Activated CD4-positive, alpha-beta memory T cell treated with anti-CD3 and anti-CD28 coated beads, Interleukin-2, amount 10 ng/mL, durations not matched to agents 7 days and 5 days (primary cell): ENCODE measurements at regions of chr6 and their contacts with region 1.

Region 1: GRCh38 chr6:31493875-31494694 is 3.9 kb upstream of the MICB start:
- DNase-seq: peak; percentile 85
- H3K4me3 Mint-ChIP-seq: peak overlapping the region; percentile 81
- H3K27ac Mint-ChIP-seq: peak overlapping the region; percentile 78
- H3K4me1 Mint-ChIP-seq: peaks cover 60% of the 10 kb centered on the region
- H3K27me3 Mint-ChIP-seq: no peaks in the 10 kb centered on the region

Region 2: GRCh38 chr6:31399589-31400466 is 94.3 kb before region 1 on chr6:
- CTCF ChIA-PET with region 1: interaction called, 12 read pairs
- POLR2A ChIA-PET with region 1: interaction called, 20 read pairs
- DNase-seq: peak; percentile 68
- H3K4me3 Mint-ChIP-seq: peak overlapping the region; percentile 87
- H3K27ac Mint-ChIP-seq: peak overlapping the region; percentile 87
- H3K4me1 Mint-ChIP-seq: peaks cover 52% of the 10 kb centered on the region
- H3K27me3 Mint-ChIP-seq: peaks cover 2% of the 10 kb centered on the region

Region 3: DNA sequence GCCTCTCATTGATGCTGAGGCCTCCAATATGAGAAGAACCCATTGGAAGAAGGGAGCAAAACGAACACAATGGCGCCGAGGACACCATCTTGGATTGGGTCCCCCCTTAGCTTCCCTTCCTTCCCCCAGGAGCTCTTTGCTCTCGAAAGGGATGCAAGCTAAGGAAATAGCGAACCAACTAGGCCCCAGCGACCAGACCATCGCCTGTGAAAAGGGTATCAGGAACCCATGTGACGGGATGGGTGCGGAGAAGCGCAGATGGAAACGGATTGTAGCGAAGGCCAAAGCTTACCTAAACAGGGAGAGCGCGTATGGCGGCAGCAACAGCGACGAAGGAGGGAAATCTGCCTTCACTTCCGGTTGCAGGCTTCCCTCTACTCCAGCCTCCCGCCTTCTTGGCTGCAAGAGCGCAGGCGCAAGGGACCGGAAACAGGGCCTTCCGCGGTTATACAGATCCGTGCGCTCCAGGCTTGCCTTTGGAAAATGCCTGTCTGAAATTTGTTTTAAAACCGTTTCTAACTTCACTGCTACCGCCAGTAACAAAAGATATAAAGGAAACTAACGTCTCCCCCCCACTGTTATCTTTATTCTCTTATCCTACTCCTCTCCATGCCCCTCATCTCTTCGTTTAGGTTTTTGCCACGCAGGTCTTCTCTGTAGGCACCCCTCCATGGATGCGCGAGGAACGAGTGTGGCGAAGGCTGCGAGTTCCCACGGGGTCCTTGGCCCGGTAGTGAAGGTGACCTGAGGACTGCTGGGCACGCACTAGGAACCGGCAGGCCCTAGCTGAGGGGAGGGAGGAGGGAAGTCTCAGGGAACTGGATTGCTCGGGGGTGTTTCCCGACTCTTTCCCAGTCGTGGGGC is 47.8 kb after region 1 on chr6 and contains the start of gene DDX39B:
- CTCF ChIA-PET with region 1: interaction called, 53 read pairs
- POLR2A ChIA-PET with region 1: interaction called, 164 read pairs
- DNase-seq: peak; percentile 94
- H3K4me3 Mint-ChIP-seq: peak within 1 kb of the TSS; percentile 89
- H3K27ac Mint-ChIP-seq: peak within 1 kb of the TSS; percentile 75
- H3K4me1 Mint-ChIP-seq: peaks cover 52% of the 10 kb centered on the region
- H3K27me3 Mint-ChIP-seq: no peaks in the 10 kb centered on the region
- total RNA-seq, gene DDX39B: 427 to 434 TPM

Region 4: GRCh38 chr6:31559958-31560696 is 66.0 kb after region 1 on chr6:
- CTCF ChIA-PET with region 1: no interaction called
- POLR2A ChIA-PET with region 1: interaction called, 13 read pairs
- DNase-seq: peak; percentile 67
- H3K4me3 Mint-ChIP-seq: peak overlapping the region; percentile 66
- H3K27ac Mint-ChIP-seq: peak overlapping the region; percentile 61
- H3K4me1 Mint-ChIP-seq: peaks cover 69% of the 10 kb centered on the region
- H3K27me3 Mint-ChIP-seq: peaks cover 30% of the 10 kb centered on the region

Region 5: DNA sequence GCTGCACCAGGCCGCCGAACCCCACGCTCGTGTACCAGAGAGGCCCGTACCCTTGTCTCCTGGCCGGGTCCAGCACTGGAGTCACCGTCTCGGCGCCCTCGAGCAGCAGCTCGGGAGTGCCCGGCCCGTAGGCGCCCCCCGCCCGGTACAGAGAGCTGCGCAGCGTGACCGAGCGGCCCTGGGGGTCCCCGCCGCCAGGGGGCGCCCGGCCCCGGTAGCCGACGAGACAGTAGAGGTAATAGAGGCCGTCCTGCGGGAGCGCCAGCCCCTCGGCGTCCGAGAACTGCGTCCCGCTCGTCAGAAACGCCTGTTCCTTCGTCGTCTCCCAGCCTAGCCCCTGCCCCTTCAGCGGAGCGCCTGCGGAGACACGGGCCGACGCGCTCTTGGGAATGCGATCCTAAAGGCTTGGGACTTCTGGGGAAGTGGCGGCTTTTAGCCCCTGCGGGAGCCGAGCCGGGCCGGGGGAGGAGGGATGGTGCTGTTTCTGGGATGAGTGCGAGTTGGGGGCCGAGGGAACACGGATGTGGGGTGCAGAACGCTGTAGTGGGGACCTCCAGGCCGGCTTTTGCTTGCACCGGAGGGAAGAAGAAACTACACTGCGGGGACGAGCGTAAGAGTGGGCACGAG is 86.8 kb after region 1 on chr6:
- CTCF ChIA-PET with region 1: interaction called, 4 read pairs
- POLR2A ChIA-PET with region 1: interaction called, 51 read pairs
- DNase-seq: peak; percentile 89
- H3K4me3 Mint-ChIP-seq: peak overlapping the region; percentile 91
- H3K27ac Mint-ChIP-seq: peak overlapping the region; percentile 94
- H3K4me1 Mint-ChIP-seq: peaks cover 58% of the 10 kb centered on the region
- H3K27me3 Mint-ChIP-seq: no peaks in the 10 kb centered on the region

Region 6: DNA sequence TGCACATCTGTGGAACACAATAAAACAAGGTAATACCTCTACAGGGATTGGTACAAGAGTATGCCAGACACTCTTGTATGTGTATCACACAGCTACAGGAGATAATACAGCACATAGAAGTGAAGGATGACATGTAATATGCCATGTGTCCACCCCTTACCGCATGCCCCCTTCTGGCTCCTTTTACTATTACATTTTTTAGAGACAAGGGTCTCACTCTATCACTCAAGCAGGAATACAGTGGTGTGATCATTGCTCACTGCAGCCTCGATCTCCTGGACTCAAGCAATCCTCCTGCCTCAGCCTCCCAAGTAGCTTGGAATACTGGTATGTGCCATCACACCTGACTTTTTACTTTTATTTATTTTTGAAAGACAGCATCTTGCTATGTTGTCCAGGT is 102.9 kb after region 1 on chr6:
- CTCF ChIA-PET with region 1: interaction called, 47 read pairs
- POLR2A ChIA-PET with region 1: interaction called, 16 read pairs
- DNase-seq: peak; percentile 49
- H3K4me3 Mint-ChIP-seq: no peak overlapping the region
- H3K27ac Mint-ChIP-seq: no peak overlapping the region
- H3K4me1 Mint-ChIP-seq: peaks cover 53% of the 10 kb centered on the region
- H3K27me3 Mint-ChIP-seq: no peaks in the 10 kb centered on the region

Region 7: DNA sequence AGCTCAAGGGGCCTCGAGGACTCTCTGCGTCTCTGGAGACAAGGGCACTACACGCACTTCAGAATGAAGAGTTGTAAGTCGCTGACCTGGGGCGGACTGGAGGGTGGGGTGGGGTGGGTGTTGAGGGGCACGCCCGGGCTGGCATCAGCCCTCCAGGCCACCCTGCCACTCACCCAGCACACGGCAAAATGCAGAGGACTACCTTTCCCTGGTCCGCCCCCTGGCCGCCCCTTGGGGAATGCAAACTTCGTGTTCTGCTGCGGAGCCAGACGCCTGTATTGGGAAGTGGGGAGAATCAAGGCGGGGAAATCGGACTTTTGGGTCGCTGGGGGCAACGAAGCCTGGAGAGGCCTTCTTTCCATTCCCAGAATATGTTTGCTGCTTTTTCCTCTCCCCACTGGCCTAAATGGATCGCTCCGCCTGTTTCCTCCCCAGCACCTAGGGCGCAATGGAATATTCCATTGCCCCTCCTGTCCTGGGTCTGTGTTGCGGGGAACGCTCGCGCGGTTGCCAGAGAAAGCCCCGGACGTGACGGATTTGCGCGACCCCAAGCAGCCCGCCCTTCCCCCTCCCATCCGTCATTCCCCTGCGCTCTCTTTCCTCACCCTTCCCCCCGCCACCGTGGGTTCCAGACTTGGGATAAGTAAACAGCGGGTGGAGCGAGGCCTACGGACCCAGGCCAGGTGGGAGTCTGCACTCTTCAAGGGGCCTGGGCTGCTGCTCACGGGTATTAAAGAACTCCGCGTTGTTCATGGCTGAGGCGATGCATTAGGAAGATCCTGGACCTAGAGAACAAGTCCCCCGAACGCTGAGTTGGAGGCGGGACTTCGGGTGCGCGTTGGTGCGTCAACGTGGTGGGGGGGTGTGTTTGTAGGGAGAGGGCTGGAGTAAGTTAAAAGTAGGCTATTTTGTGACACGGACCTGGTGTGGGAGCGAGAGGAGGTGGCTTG is 659.8 kb after region 1 on chr6 and contains the start of gene PPT2:
- CTCF ChIA-PET with region 1: no interaction called
- POLR2A ChIA-PET with region 1: no interaction called
- DNase-seq: peak; percentile 72
- H3K4me3 Mint-ChIP-seq: peak within 1 kb of the TSS; percentile 91
- H3K27ac Mint-ChIP-seq: peak within 1 kb of the TSS; percentile 58
- H3K4me1 Mint-ChIP-seq: peaks cover 26% of the 10 kb centered on the region
- H3K27me3 Mint-ChIP-seq: peaks cover 36% of the 10 kb centered on the region
- total RNA-seq, gene PPT2: 8.3 to 9.4 TPM